Caco-2 (cell line): ENCODE measurements at regions of chr15 and their contacts with region 1.

Region 1: DNA sequence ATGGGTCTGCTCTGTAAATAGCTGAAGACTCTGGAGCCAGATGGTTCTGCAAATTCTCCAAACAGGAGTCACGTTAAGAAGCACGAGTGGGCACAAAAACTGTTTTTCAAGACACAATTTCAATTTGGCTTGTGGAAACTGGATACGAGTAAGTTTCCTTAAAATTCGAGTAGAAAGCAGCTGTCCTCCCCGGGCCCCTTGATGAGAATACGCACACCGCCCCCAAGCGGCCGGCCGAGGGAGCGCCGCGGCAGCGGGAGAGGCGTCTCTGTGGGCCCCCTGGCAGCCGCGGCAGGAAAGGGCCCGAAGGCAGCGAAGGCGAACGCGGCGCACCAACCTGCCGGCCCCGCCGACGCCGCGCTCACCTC is 778 bp upstream of the THBS1 start:
- DNase-seq: peak; percentile 85 to 93
- H3K4me3 ChIP-seq: peak overlapping the region; percentile 84
- H3K4me3 Mint-ChIP-seq: peak overlapping the region; percentile 78
- H3K27ac Mint-ChIP-seq: peak overlapping the region; percentile 43
- H3K4me1 ChIP-seq: peaks cover 26% of the 10 kb centered on the region; the same call in 1 of the 2 replicates
- H3K4me1 Mint-ChIP-seq: peaks cover under 1% of the 10 kb centered on the region
- H3K27me3 ChIP-seq: no peaks in the 10 kb centered on the region
- H3K27me3 Mint-ChIP-seq: no peaks in the 10 kb centered on the region
- CTCF ChIP-seq: peak; percentile 88 to 95

Region 2: GRCh38 chr15:38707802-38708671 is 872.1 kb before region 1 on chr15:
- CTCF ChIA-PET with region 1: interaction called, 6 read pairs
- POLR2A ChIA-PET with region 1: interaction called, 6 read pairs
- intact Hi-C with region 1: loop called (anchors 5 kb)
- DNase-seq: peak in 1 of 2 experiments; percentile 62
- H3K4me3 ChIP-seq: no peak overlapping the region
- H3K4me3 Mint-ChIP-seq: no peak overlapping the region
- H3K27ac Mint-ChIP-seq: no peak overlapping the region
- H3K4me1 ChIP-seq: peaks cover 1% of the 10 kb centered on the region; the same call in 1 of the 2 replicates
- H3K4me1 Mint-ChIP-seq: no peaks in the 10 kb centered on the region
- H3K27me3 ChIP-seq: no peaks in the 10 kb centered on the region
- H3K27me3 Mint-ChIP-seq: no peaks in the 10 kb centered on the region
- CTCF ChIP-seq: peak; percentile 68 to 70

Region 3: GRCh38 chr15:39125904-39126303 is 454.2 kb before region 1 on chr15:
- CTCF ChIA-PET with region 1: no interaction called
- POLR2A ChIA-PET with region 1: interaction called, 4 read pairs
- intact Hi-C with region 1: loop called (anchors 1 kb)
- DNase-seq: peak in 1 of 2 experiments; percentile 52
- H3K4me3 ChIP-seq: no peak overlapping the region
- H3K4me3 Mint-ChIP-seq: no peak overlapping the region
- H3K27ac Mint-ChIP-seq: no peak overlapping the region
- H3K4me1 ChIP-seq: peaks cover 37% of the 10 kb centered on the region
- H3K4me1 Mint-ChIP-seq: peaks cover 22% of the 10 kb centered on the region
- H3K27me3 ChIP-seq: no peaks in the 10 kb centered on the region
- H3K27me3 Mint-ChIP-seq: no peaks in the 10 kb centered on the region
- CTCF ChIP-seq: peak; percentile 57 to 65

Region 4: GRCh38 chr15:39273717-39274411 is 306.2 kb before region 1 on chr15:
- CTCF ChIA-PET with region 1: interaction called, 3 read pairs
- POLR2A ChIA-PET with region 1: interaction called, 13 read pairs
- intact Hi-C with region 1: loop called (anchors 2 kb)
- DNase-seq: peak; percentile 81 to 82
- H3K4me3 ChIP-seq: no peak overlapping the region
- H3K4me3 Mint-ChIP-seq: peak overlapping the region; percentile 51
- H3K27ac Mint-ChIP-seq: peak overlapping the region; percentile 69
- H3K4me1 ChIP-seq: peaks cover 60% of the 10 kb centered on the region
- H3K4me1 Mint-ChIP-seq: peaks cover 48% of the 10 kb centered on the region
- H3K27me3 ChIP-seq: no peaks in the 10 kb centered on the region
- H3K27me3 Mint-ChIP-seq: no peaks in the 10 kb centered on the region
- CTCF ChIP-seq: no peak

Region 5: GRCh38 chr15:39438799-39439592 is 141.1 kb before region 1 on chr15:
- CTCF ChIA-PET with region 1: interaction called, 4 read pairs
- POLR2A ChIA-PET with region 1: no interaction called
- intact Hi-C with region 1: loop called (anchors 5 kb)
- DNase-seq: peak; percentile 44 to 48
- H3K4me3 ChIP-seq: no peak overlapping the region
- H3K4me3 Mint-ChIP-seq: no peak overlapping the region
- H3K27ac Mint-ChIP-seq: no peak overlapping the region
- H3K4me1 ChIP-seq: peaks cover 26% of the 10 kb centered on the region
- H3K4me1 Mint-ChIP-seq: peaks cover 24% of the 10 kb centered on the region
- H3K27me3 ChIP-seq: no peaks in the 10 kb centered on the region
- H3K27me3 Mint-ChIP-seq: no peaks in the 10 kb centered on the region
- CTCF ChIP-seq: peak; percentile 28 to 47

Region 6: GRCh38 chr15:39511916-39512260 is 68.2 kb before region 1 on chr15:
- CTCF ChIA-PET with region 1: no interaction called
- POLR2A ChIA-PET with region 1: no interaction called
- intact Hi-C with region 1: no loop called
- DNase-seq: no peak
- H3K4me3 ChIP-seq: no peak overlapping the region
- H3K4me3 Mint-ChIP-seq: no peak overlapping the region
- H3K27ac Mint-ChIP-seq: no peak overlapping the region
- H3K4me1 ChIP-seq: no peaks in the 10 kb centered on the region
- H3K4me1 Mint-ChIP-seq: no peaks in the 10 kb centered on the region
- H3K27me3 ChIP-seq: no peaks in the 10 kb centered on the region
- H3K27me3 Mint-ChIP-seq: no peaks in the 10 kb centered on the region
- CTCF ChIP-seq: no peak

Region 7: GRCh38 chr15:39756806-39757522 is 176.9 kb after region 1 on chr15:
- CTCF ChIA-PET with region 1: interaction called, 5 read pairs
- POLR2A ChIA-PET with region 1: interaction called, 7 read pairs
- intact Hi-C with region 1: loop called (anchors 5 kb)
- DNase-seq: peak in 1 of 2 experiments; percentile 58
- H3K4me3 ChIP-seq: no peak overlapping the region
- H3K4me3 Mint-ChIP-seq: no peak overlapping the region
- H3K27ac Mint-ChIP-seq: peak overlapping the region; percentile 45
- H3K4me1 ChIP-seq: peaks cover 7% of the 10 kb centered on the region; the same call in 1 of the 2 replicates
- H3K4me1 Mint-ChIP-seq: peaks cover 24% of the 10 kb centered on the region
- H3K27me3 ChIP-seq: no peaks in the 10 kb centered on the region
- H3K27me3 Mint-ChIP-seq: no peaks in the 10 kb centered on the region
- CTCF ChIP-seq: peak; percentile 56 to 74